ENCODE measurements at regions of chr13 and their contacts with region 1.

Region 1: GRCh38 chr13:41456768-41457588 is at the start of gene RGCC:
- DNase-seq: peak; percentile 89 to 98 (median 94)
- ATAC-seq: peak; percentile 90
- H3K4me3 ChIP-seq: peak within 1 kb of the TSS; percentile 84
- H3K4me3 Mint-ChIP-seq: peak within 1 kb of the TSS; percentile 91 to 98 (median 96)
- H3K27ac ChIP-seq: peak within 1 kb of the TSS; percentile 97
- H3K27ac Mint-ChIP-seq: peak within 1 kb of the TSS; percentile 93 to 99 (median 98)
- H3K4me1 ChIP-seq: peaks cover 22 to 37% of the 10 kb centered on the region in 2 donors
- H3K4me1 Mint-ChIP-seq: peaks cover 28 to 47% (median 38%) of the 10 kb centered on the region in 7 donors
- H3K27me3 ChIP-seq: no peaks in the 10 kb centered on the region
- H3K27me3 Mint-ChIP-seq: peaks cover 0 to 26% (median 0%) of the 10 kb centered on the region in 5 donors
- total RNA-seq, gene RGCC: 45.9 to 402 (median 197) TPM

Region 2: DNA sequence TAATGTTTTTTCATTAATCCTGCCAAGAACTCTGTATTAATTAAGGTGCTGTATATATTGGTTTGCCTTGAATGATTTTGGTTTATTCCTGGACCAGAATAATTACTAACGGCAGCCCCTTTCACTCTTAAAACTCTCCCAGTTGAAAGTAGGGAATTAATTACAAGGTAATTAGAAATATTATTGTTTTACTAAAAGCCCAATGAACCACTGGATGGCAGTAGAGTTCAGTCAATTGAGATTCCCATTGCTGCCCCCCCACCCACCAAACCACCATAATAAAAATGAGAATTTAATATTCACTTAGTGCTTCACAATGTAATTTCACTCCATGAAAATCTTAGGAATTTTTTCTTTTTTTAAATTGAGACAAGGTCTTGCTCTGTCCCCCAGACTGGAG is 381.9 kb before region 1 on chr13:
- CTCF ChIA-PET with region 1: no interaction called
- POLR2A ChIA-PET with region 1: no interaction called
- intact Hi-C with region 1: loop called in 1 of 2 experiments (anchors 5 kb)
- DNase-seq: peak in 7 of 9 donors; percentile 15 to 58 (median 51)
- ATAC-seq: peak; percentile 63
- H3K4me3 ChIP-seq: no peak overlapping the region
- H3K4me3 Mint-ChIP-seq: no peak overlapping the region
- H3K27ac ChIP-seq: no peak overlapping the region
- H3K27ac Mint-ChIP-seq: no peak overlapping the region
- H3K4me1 ChIP-seq: no peaks in the 10 kb centered on the region
- H3K4me1 Mint-ChIP-seq: no peaks in the 10 kb centered on the region
- H3K27me3 ChIP-seq: no peaks in the 10 kb centered on the region
- H3K27me3 Mint-ChIP-seq: no peaks in the 10 kb centered on the region

Region 3: GRCh38 chr13:41268764-41269163 is 188.2 kb before region 1 on chr13:
- CTCF ChIA-PET with region 1: no interaction called
- POLR2A ChIA-PET with region 1: no interaction called
- intact Hi-C with region 1: loop called in 1 of 2 experiments (anchors 5 kb)
- DNase-seq: peak in 5 of 9 donors; percentile 14 to 31 (median 23)
- ATAC-seq: no peak
- H3K4me3 ChIP-seq: no peak overlapping the region
- H3K4me3 Mint-ChIP-seq: no peak overlapping the region
- H3K27ac ChIP-seq: no peak overlapping the region
- H3K27ac Mint-ChIP-seq: peak overlapping the region in 2 of 9 donors; percentile 57 to 62
- H3K4me1 ChIP-seq: peaks cover 4 to 23% of the 10 kb centered on the region in 2 donors
- H3K4me1 Mint-ChIP-seq: peaks cover 7 to 50% (median 25%) of the 10 kb centered on the region in 7 donors
- H3K27me3 ChIP-seq: no peaks in the 10 kb centered on the region
- H3K27me3 Mint-ChIP-seq: no peaks in the 10 kb centered on the region

Region 4: DNA sequence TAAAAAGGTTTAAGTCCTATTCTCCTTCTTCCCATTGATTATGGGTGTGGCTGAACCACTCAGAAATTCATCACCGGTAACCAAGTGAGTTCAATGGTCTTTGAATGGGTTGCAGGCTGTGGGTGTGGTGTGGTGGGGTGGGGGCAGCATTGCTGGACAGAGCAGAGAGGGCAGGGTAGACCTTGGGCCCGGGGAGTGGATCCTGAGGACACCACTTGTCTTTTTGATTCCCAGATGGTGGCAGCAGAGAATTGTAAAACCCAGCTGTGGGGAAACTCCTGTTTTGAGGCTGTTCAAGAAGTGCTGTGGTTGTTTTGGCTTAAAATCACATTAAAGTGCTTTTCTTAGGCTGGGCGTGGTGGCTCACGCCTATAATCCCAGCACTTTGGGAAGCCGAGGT is 45.5 kb before region 1 on chr13:
- CTCF ChIA-PET with region 1: no interaction called
- POLR2A ChIA-PET with region 1: interaction called, 3 read pairs
- intact Hi-C with region 1: loop called in 1 of 2 experiments (anchors 2 kb)
- DNase-seq: peak in 6 of 9 donors; percentile 17 to 54 (median 28)
- ATAC-seq: peak; percentile 48
- H3K4me3 ChIP-seq: no peak overlapping the region
- H3K4me3 Mint-ChIP-seq: no peak overlapping the region
- H3K27ac ChIP-seq: no peak overlapping the region
- H3K27ac Mint-ChIP-seq: peak overlapping the region in 2 of 9 donors; percentile 36 to 66
- H3K4me1 ChIP-seq: no peaks in the 10 kb centered on the region
- H3K4me1 Mint-ChIP-seq: peaks cover 0 to 4% (median 0%) of the 10 kb centered on the region in 7 donors
- H3K27me3 ChIP-seq: no peaks in the 10 kb centered on the region
- H3K27me3 Mint-ChIP-seq: peaks cover 0 to 13% (median 0%) of the 10 kb centered on the region in 5 donors

Region 5: GRCh38 chr13:41443966-41444365 is 13.0 kb before region 1 on chr13:
- CTCF ChIA-PET with region 1: no interaction called
- POLR2A ChIA-PET with region 1: no interaction called
- intact Hi-C with region 1: no loop called
- DNase-seq: no peak
- ATAC-seq: no peak
- H3K4me3 ChIP-seq: no peak overlapping the region
- H3K4me3 Mint-ChIP-seq: no peak overlapping the region
- H3K27ac ChIP-seq: no peak overlapping the region
- H3K27ac Mint-ChIP-seq: no peak overlapping the region
- H3K4me1 ChIP-seq: no peaks in the 10 kb centered on the region
- H3K4me1 Mint-ChIP-seq: peaks cover 0 to 5% (median 0%) of the 10 kb centered on the region in 7 donors
- H3K27me3 ChIP-seq: no peaks in the 10 kb centered on the region
- H3K27me3 Mint-ChIP-seq: no peaks in the 10 kb centered on the region

Region 6: GRCh38 chr13:41502673-41503072 is 45.7 kb after region 1 on chr13:
- CTCF ChIA-PET with region 1: interaction called, 14 read pairs
- POLR2A ChIA-PET with region 1: interaction called, 284 read pairs
- intact Hi-C with region 1: loop called in 1 of 2 experiments (anchors 1 kb)
- DNase-seq: peak in 7 of 9 donors; percentile 34 to 63 (median 56)
- ATAC-seq: peak; percentile 72
- H3K4me3 ChIP-seq: no peak overlapping the region
- H3K4me3 Mint-ChIP-seq: peak overlapping the region in 8 of 10 donors; percentile 35 to 68 (median 51)
- H3K27ac ChIP-seq: peak overlapping the region; percentile 22
- H3K27ac Mint-ChIP-seq: peak overlapping the region; percentile 34 to 96 (median 91)
- H3K4me1 ChIP-seq: peaks cover 32 to 43% of the 10 kb centered on the region in 2 donors
- H3K4me1 Mint-ChIP-seq: peaks cover 41 to 63% (median 55%) of the 10 kb centered on the region in 7 donors
- H3K27me3 ChIP-seq: no peaks in the 10 kb centered on the region
- H3K27me3 Mint-ChIP-seq: no peaks in the 10 kb centered on the region

Region 7: GRCh38 chr13:41652727-41653361 is 195.9 kb after region 1 on chr13:
- CTCF ChIA-PET with region 1: interaction called, 31 read pairs
- POLR2A ChIA-PET with region 1: interaction called, 8 read pairs
- intact Hi-C with region 1: loop called (anchors 1 kb)
- DNase-seq: peak in 7 of 9 donors; percentile 19 to 60 (median 50)
- ATAC-seq: peak; percentile 54
- H3K4me3 ChIP-seq: no peak overlapping the region
- H3K4me3 Mint-ChIP-seq: no peak overlapping the region
- H3K27ac ChIP-seq: no peak overlapping the region
- H3K27ac Mint-ChIP-seq: peak overlapping the region in 1 of 9 donors; percentile 36
- H3K4me1 ChIP-seq: peaks cover 0 to 5% of the 10 kb centered on the region in 2 donors
- H3K4me1 Mint-ChIP-seq: peaks cover 0 to 24% (median 12%) of the 10 kb centered on the region in 7 donors
- H3K27me3 ChIP-seq: no peaks in the 10 kb centered on the region
- H3K27me3 Mint-ChIP-seq: no peaks in the 10 kb centered on the region

Region 8: GRCh38 chr13:42667646-42668045 is 1210.7 kb after region 1 on chr13:
- CTCF ChIA-PET with region 1: no interaction called
- POLR2A ChIA-PET with region 1: no interaction called
- intact Hi-C with region 1: no loop called
- DNase-seq: no peak
- ATAC-seq: no peak
- H3K4me3 ChIP-seq: no peak overlapping the region
- H3K4me3 Mint-ChIP-seq: no peak overlapping the region
- H3K27ac ChIP-seq: no peak overlapping the region
- H3K27ac Mint-ChIP-seq: no peak overlapping the region
- H3K4me1 ChIP-seq: no peaks in the 10 kb centered on the region
- H3K4me1 Mint-ChIP-seq: no peaks in the 10 kb centered on the region
- H3K27me3 ChIP-seq: no peaks in the 10 kb centered on the region
- H3K27me3 Mint-ChIP-seq: peaks cover 17 to 37% (median 31%) of the 10 kb centered on the region in 5 donors